ENCODE measurements at regions of chr19 and their contacts with region 1.

Region 1: GRCh38 chr19:57410877-57411671 is at the start of gene ZNF17:
- DNase-seq: peak; percentile 90 to 91
- H3K4me3 ChIP-seq: peak within 1 kb of the TSS; percentile 83
- H3K27ac ChIP-seq: no peak within 1 kb of the TSS
- H3K4me1 ChIP-seq: peaks cover 13% of the 10 kb centered on the region
- H3K27me3 ChIP-seq: no peaks in the 10 kb centered on the region
- CTCF ChIP-seq: no peak
- total RNA-seq, gene ZNF17: 10.5 TPM in 2 replicates

Region 2: GRCh38 chr19:57212109-57212508 is 199.0 kb before region 1 on chr19:
- CTCF ChIA-PET with region 1: no interaction called
- POLR2A ChIA-PET with region 1: no interaction called
- intact Hi-C with region 1: no loop called
- DNase-seq: no peak
- H3K4me3 ChIP-seq: no peak overlapping the region
- H3K27ac ChIP-seq: no peak overlapping the region
- H3K4me1 ChIP-seq: no peaks in the 10 kb centered on the region
- H3K27me3 ChIP-seq: no peaks in the 10 kb centered on the region
- CTCF ChIP-seq: no peak

Region 3: DNA sequence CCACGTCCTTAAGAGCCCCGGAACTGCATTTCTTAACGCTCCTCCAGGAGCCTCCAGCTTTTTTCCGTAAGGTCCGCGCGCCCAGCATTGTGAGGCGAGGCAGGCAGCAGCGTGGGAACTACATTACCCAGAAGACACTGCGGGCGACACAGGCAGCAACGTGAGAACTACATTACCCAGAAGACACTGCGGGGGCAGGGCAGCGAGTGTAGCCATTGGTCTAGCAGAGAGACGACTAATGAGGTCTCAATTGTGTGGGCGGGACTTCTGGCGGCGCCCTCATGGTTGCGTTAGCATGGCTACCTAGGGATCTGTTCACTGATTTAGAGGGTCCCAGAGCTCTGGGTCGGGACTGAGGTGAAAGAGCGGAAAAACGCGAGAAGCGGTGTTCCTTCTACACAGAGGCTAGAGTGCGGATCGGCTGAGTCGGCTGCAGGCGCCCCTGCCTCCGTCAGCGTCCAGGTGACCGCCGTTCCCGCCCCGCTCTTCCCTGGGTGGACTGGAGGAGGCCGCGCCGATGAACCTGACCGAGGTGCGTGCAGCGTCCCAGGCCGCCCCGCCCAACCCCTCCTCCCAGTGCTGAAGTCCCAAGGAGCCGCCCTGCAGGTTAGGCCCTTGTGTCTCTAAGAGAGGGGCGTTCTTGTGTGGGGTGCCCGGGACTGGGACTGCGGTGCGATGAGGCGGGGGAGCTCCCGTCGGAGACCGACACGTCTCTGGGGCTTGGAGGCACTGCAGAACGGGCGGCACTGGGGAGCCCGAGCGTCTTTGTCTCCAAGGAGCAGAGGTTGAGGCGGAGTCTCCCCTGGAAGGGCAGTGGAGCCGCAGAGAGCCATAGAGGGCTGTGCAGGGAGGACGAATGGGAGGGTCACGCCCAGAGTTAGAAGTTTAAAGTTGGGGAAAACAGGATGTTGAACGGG is 24.2 kb after region 1 on chr19 and contains the start of gene ZNF749:
- CTCF ChIA-PET with region 1: no interaction called
- POLR2A ChIA-PET with region 1: no interaction called
- intact Hi-C with region 1: loop called (anchors 1 kb)
- DNase-seq: peak; percentile 97
- H3K4me3 ChIP-seq: peak within 1 kb of the TSS; percentile 81
- H3K27ac ChIP-seq: peak within 1 kb of the TSS; percentile 33
- H3K4me1 ChIP-seq: peaks cover 16% of the 10 kb centered on the region
- H3K27me3 ChIP-seq: no peaks in the 10 kb centered on the region
- CTCF ChIP-seq: no peak
- total RNA-seq, gene ZNF749: 17.9 and 19.4 TPM in 2 replicates

Region 4: DNA sequence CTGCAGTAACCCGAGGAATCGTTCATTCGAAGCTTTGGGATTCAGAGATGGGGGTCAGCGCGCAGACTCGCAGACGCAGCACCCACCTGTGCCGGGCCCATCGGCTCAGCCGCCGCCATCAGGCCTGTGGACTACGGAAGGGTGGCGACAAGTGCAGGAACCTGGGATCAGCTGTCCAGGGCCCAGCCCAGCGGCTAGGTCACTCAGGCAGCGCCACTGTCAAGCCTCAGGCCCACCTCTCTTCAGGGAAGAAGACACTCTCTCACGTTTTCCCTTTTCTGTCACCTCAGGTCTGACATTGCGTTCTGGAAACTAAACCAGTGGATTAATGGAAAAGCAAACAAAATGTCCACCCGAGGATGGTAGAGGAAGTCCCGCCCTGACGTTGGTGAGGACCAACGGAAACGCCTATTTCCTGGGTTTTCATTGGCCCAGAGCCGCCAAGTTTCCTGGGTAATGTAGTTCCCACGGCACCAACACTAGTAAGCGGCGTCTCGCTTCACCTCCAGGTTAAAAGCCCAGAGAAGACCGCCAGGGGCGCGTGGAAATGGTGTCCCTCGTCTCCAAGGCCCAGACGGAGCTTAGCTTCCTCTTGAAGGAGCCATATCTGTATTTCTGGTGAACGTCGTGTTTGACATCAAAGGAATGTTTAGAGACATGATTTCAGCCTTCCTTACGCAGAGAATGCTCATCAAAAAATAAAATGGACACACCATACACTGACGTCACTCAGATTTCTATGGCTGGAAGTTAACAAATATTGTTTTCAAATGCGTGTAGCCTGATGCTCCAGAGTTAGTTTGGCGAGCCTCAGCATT is 66.3 kb after region 1 on chr19 and contains the start of gene ZNF772:
- CTCF ChIA-PET with region 1: no interaction called
- POLR2A ChIA-PET with region 1: no interaction called
- intact Hi-C with region 1: loop called (anchors 2 kb)
- DNase-seq: peak; percentile 89 to 94
- H3K4me3 ChIP-seq: peak within 1 kb of the TSS; percentile 70
- H3K27ac ChIP-seq: no peak within 1 kb of the TSS
- H3K4me1 ChIP-seq: no peaks in the 10 kb centered on the region; the same call in 1 of the 2 replicates
- H3K27me3 ChIP-seq: no peaks in the 10 kb centered on the region
- CTCF ChIP-seq: peak; percentile 79
- total RNA-seq, gene ZNF772: 8.3 and 9.1 TPM in 2 replicates

Region 5: DNA sequence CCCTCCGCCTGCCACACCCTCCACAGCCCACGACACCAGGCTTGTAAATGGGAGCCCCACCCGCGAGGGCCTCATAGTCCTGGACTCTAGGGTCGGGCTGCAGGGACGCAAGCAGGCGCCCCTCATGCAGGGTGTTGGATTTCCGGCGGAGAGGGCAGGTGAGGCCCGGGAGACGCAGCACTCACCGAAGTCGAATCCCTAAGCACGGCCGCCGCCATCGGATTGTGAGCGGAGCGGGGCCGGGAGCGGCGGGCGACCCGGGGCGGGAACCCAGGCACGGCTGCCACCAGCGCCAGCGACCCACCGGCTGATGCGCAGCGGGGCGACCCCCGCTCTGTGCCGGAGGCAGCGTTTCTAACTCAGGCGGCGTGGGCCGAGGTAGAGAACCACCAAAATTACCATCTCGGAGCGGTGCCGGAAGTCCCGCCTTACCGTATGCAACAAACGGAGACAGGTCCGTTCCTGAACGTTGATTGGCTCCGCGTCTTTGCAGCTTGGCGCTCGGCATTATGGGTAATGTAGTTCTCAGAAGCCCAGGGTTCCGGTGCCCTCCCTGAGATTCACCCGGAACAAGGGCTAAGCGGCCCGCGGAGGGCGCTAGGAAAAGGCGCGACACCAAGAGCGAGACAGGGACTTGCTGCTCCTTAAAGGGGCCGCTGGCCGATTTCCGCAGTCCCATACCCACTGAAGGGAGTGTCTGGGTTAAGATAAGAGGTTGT is 167.6 kb after region 1 on chr19 and contains the start of gene ZNF416:
- CTCF ChIA-PET with region 1: no interaction called
- POLR2A ChIA-PET with region 1: no interaction called
- intact Hi-C with region 1: loop called (anchors 1 kb)
- DNase-seq: peak; percentile 97
- H3K4me3 ChIP-seq: peak within 1 kb of the TSS; percentile 75
- H3K27ac ChIP-seq: no peak within 1 kb of the TSS
- H3K4me1 ChIP-seq: peaks cover 10% of the 10 kb centered on the region
- H3K27me3 ChIP-seq: 0 out of 2 replicates have a peak, but pooled peaks cover 3% of the 10 kb centered on the region
- CTCF ChIP-seq: no peak; the same call in 1 of the 2 replicates
- total RNA-seq, gene ZNF416: 4.8 and 5.6 TPM in 2 replicates

Region 6: DNA sequence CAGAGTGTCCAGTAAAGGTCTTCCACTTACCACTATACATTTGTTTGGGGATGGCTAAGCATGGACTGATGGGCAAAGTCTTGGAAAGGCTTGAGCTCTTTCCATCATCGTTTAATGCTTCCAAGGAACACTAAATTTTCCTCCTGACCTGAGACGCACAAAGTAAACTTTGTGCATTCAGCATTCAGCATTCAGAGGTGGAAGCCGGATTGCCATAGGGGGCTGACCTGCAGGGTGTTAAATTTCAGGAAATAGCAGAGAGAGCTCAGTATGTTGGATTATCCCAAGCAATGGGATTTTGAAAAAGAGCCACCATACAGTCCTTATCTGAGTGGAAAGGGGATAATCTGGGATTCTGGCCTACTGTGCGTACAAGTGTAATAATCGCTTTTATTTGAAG is 389.6 kb after region 1 on chr19:
- CTCF ChIA-PET with region 1: no interaction called
- POLR2A ChIA-PET with region 1: no interaction called
- intact Hi-C with region 1: no loop called
- DNase-seq: no peak
- H3K4me3 ChIP-seq: no peak overlapping the region
- H3K27ac ChIP-seq: no peak overlapping the region
- H3K4me1 ChIP-seq: peaks cover 30% of the 10 kb centered on the region
- H3K27me3 ChIP-seq: no peaks in the 10 kb centered on the region
- CTCF ChIP-seq: no peak

Region 7: GRCh38 chr19:57903618-57904184 is 492.6 kb after region 1 on chr19:
- CTCF ChIA-PET with region 1: no interaction called
- POLR2A ChIA-PET with region 1: no interaction called
- intact Hi-C with region 1: loop called (anchors 5 kb)
- DNase-seq: no peak
- H3K4me3 ChIP-seq: no peak overlapping the region
- H3K27ac ChIP-seq: no peak overlapping the region
- H3K4me1 ChIP-seq: no peaks in the 10 kb centered on the region
- H3K27me3 ChIP-seq: no peaks in the 10 kb centered on the region
- CTCF ChIP-seq: peak; percentile 48; the same call in 1 of the 2 replicates

Region 8: DNA sequence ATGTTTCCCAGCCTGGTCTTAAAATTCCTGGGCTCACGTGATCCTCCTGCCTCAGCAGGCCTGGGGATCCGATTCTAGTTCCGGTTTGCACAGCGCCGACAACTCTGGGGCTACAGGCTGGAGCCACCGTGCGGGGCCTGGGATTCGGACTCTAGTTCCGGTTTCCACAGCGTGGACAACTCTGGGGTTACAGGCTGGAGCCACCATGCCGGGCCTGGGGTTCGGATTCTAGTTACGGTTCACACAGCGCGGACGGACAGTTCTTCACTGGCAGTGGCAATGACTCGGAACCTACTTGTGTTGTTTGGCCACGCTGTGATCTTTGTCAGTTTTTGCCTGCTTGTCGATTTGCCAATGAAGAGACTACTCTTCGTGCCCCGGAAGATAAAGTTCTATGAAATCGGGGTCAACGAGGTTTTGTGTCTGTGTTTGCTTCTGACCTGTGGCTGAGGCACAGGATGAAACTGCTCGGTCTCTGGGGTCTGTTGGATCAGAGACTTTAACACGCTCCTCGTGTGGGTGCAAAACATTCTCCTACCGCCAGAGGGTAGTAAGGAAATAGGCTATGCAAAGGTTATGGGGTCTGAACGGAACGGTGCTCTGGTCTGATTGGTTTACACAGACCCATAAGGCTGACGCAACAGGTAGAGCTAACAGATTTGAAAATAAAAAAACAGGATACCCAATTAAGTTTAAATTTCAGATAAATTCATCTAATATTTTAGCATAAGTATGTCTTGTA is 610.6 kb after region 1 on chr19:
- CTCF ChIA-PET with region 1: no interaction called
- POLR2A ChIA-PET with region 1: no interaction called
- intact Hi-C with region 1: loop called (anchors 5 kb)
- DNase-seq: peak; percentile 23 to 41
- H3K4me3 ChIP-seq: no peak overlapping the region
- H3K27ac ChIP-seq: no peak overlapping the region
- H3K4me1 ChIP-seq: no peaks in the 10 kb centered on the region
- H3K27me3 ChIP-seq: peaks cover 18% of the 10 kb centered on the region
- CTCF ChIP-seq: peak; percentile 59

Region 9: GRCh38 chr19:58154679-58155648 is 743.9 kb after region 1 on chr19:
- CTCF ChIA-PET with region 1: no interaction called
- POLR2A ChIA-PET with region 1: no interaction called
- intact Hi-C with region 1: loop called (anchors 1 kb)
- DNase-seq: peak; percentile 81 to 99
- H3K4me3 ChIP-seq: peak overlapping the region; percentile 91
- H3K27ac ChIP-seq: peak overlapping the region; percentile 12; the same call in 1 of the 2 replicates
- H3K4me1 ChIP-seq: no peaks in the 10 kb centered on the region
- H3K27me3 ChIP-seq: no peaks in the 10 kb centered on the region
- CTCF ChIP-seq: peak; percentile 99

Measured in PC-9 (cell line).